ENCODE measurements at regions of chr1 and their contacts with region 1.

Region 1: GRCh38 chr1:157505481-157506272 is 46.6 kb downstream of the FCRL5 start:
- DNase-seq: peak; percentile 71
- H3K4me3 ChIP-seq: no peak overlapping the region
- H3K27ac ChIP-seq: no peak overlapping the region
- H3K4me1 ChIP-seq: no peaks in the 10 kb centered on the region
- H3K27me3 ChIP-seq: no peaks in the 10 kb centered on the region
- CTCF ChIP-seq: peak; percentile 80

Region 2: GRCh38 chr1:157369808-157370521 is 135.7 kb before region 1 on chr1:
- CTCF ChIA-PET with region 1: interaction called, 4 read pairs
- POLR2A ChIA-PET with region 1: no interaction called
- intact Hi-C with region 1: loop called (anchors 5 kb)
- DNase-seq: peak; percentile 75
- H3K4me3 ChIP-seq: no peak overlapping the region
- H3K27ac ChIP-seq: no peak overlapping the region
- H3K4me1 ChIP-seq: no peaks in the 10 kb centered on the region
- H3K27me3 ChIP-seq: no peaks in the 10 kb centered on the region
- CTCF ChIP-seq: peak; percentile 86

Region 3: GRCh38 chr1:157532569-157532968 is 26.9 kb after region 1 on chr1:
- CTCF ChIA-PET with region 1: no interaction called
- POLR2A ChIA-PET with region 1: no interaction called
- intact Hi-C with region 1: no loop called
- DNase-seq: no peak
- H3K4me3 ChIP-seq: no peak overlapping the region
- H3K27ac ChIP-seq: no peak overlapping the region
- H3K4me1 ChIP-seq: no peaks in the 10 kb centered on the region
- H3K27me3 ChIP-seq: peaks cover 32% of the 10 kb centered on the region
- CTCF ChIP-seq: no peak

Region 4: GRCh38 chr1:157723157-157723556 is 217.5 kb after region 1 on chr1:
- CTCF ChIA-PET with region 1: no interaction called
- POLR2A ChIA-PET with region 1: no interaction called
- intact Hi-C with region 1: no loop called
- DNase-seq: no peak
- H3K4me3 ChIP-seq: no peak overlapping the region
- H3K27ac ChIP-seq: no peak overlapping the region
- H3K4me1 ChIP-seq: no peaks in the 10 kb centered on the region
- H3K27me3 ChIP-seq: no peaks in the 10 kb centered on the region
- CTCF ChIP-seq: no peak